Activated CD4-positive, alpha-beta T cell treated with anti-CD3 and anti-CD28 coated beads for 36 hours (primary cell): ENCODE measurements at regions of chr17 and their contacts with region 1.

Region 1: GRCh38 chr17:41665566-41666236 is 23.0 kb upstream of the EIF1 start:
- DNase-seq: peak; percentile 95
- ATAC-seq: peak; percentile 85
- H3K4me3 Mint-ChIP-seq: peak overlapping the region; percentile 78
- H3K27ac Mint-ChIP-seq: peak overlapping the region; percentile 95
- H3K4me1 Mint-ChIP-seq: peaks cover 42% of the 10 kb centered on the region
- H3K27me3 Mint-ChIP-seq: peaks cover 3% of the 10 kb centered on the region

Region 2: GRCh38 chr17:40219073-40219860 is 1446.4 kb before region 1 on chr17 and contains the start of gene WIPF2:
- CTCF ChIA-PET with region 1: no interaction called
- POLR2A ChIA-PET with region 1: no interaction called
- intact Hi-C with region 1: loop called in 1 of 2 experiments (anchors 2 kb)
- DNase-seq: peak; percentile 98
- ATAC-seq: peak; percentile 96
- H3K4me3 Mint-ChIP-seq: peak within 1 kb of the TSS; percentile 89
- H3K27ac Mint-ChIP-seq: peak within 1 kb of the TSS; percentile 100
- H3K4me1 Mint-ChIP-seq: peaks cover 26% of the 10 kb centered on the region
- H3K27me3 Mint-ChIP-seq: no peaks in the 10 kb centered on the region
- total RNA-seq, gene WIPF2: 18.4 to 23.6 TPM

Region 3: GRCh38 chr17:40857535-40857934 is 808.2 kb before region 1 on chr17:
- CTCF ChIA-PET with region 1: interaction called, 15 read pairs
- POLR2A ChIA-PET with region 1: no interaction called
- intact Hi-C with region 1: loop called (anchors 1 kb)
- DNase-seq: no peak
- ATAC-seq: no peak
- H3K4me3 Mint-ChIP-seq: no peak overlapping the region
- H3K27ac Mint-ChIP-seq: no peak overlapping the region
- H3K4me1 Mint-ChIP-seq: no peaks in the 10 kb centered on the region
- H3K27me3 Mint-ChIP-seq: peaks cover 14% of the 10 kb centered on the region

Region 4: GRCh38 chr17:41338961-41339485 is 326.7 kb before region 1 on chr17:
- CTCF ChIA-PET with region 1: no interaction called
- POLR2A ChIA-PET with region 1: no interaction called
- intact Hi-C with region 1: loop called (anchors 2 to 10 kb)
- DNase-seq: peak; percentile 41
- ATAC-seq: peak; percentile 66
- H3K4me3 Mint-ChIP-seq: no peak overlapping the region
- H3K27ac Mint-ChIP-seq: peak overlapping the region; percentile 55
- H3K4me1 Mint-ChIP-seq: peaks cover 76% of the 10 kb centered on the region
- H3K27me3 Mint-ChIP-seq: peaks cover 4% of the 10 kb centered on the region

Region 5: DNA sequence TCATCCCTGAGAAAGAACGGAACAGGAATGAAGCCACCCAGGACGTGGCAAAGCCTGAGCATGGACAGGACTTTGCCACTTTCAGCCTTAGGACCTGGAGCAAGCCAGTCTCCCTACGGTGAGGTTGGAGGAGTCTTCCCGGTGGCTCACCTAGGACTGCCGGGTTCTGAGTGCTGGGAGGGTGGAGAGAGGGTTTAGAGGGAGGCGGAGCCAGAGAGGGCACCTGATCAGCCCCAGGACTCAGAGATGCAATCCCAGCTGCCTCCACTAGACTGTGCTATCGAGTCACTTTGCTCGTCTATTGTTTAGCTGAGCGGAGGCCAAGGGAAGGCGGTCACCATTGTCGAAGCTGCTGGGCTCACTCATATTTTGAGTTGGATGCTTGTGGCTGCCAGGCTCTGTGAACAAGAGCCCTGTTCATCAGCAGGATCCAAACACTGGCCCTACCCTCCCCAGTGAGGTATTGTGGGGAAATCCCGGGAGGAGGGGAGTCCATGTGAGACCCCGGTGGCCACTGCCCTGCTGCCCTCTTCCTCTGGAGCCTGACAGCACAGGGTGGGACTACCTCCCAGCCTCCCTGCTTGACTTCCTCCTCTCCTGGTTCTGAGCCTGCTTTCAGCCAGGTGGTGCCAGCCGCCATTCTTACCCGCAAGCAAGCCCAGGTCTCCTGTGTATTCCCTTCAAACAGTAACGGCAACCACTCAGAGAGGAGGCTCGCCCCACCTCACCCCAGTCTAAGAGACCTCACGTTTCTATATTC is 86.0 kb before region 1 on chr17:
- CTCF ChIA-PET with region 1: interaction called, 11 read pairs
- POLR2A ChIA-PET with region 1: no interaction called
- intact Hi-C with region 1: loop called in 1 of 2 experiments (anchors 1 kb)
- DNase-seq: peak; percentile 89
- ATAC-seq: peak; percentile 99
- H3K4me3 Mint-ChIP-seq: no peak overlapping the region
- H3K27ac Mint-ChIP-seq: no peak overlapping the region
- H3K4me1 Mint-ChIP-seq: no peaks in the 10 kb centered on the region
- H3K27me3 Mint-ChIP-seq: peaks cover 20% of the 10 kb centered on the region

Region 6: GRCh38 chr17:41593311-41593981 is 72.3 kb before region 1 on chr17:
- CTCF ChIA-PET with region 1: no interaction called
- POLR2A ChIA-PET with region 1: no interaction called
- intact Hi-C with region 1: no loop called
- DNase-seq: no peak
- ATAC-seq: no peak
- H3K4me3 Mint-ChIP-seq: no peak overlapping the region
- H3K27ac Mint-ChIP-seq: no peak overlapping the region
- H3K4me1 Mint-ChIP-seq: no peaks in the 10 kb centered on the region
- H3K27me3 Mint-ChIP-seq: peaks cover 7% of the 10 kb centered on the region

Region 7: DNA sequence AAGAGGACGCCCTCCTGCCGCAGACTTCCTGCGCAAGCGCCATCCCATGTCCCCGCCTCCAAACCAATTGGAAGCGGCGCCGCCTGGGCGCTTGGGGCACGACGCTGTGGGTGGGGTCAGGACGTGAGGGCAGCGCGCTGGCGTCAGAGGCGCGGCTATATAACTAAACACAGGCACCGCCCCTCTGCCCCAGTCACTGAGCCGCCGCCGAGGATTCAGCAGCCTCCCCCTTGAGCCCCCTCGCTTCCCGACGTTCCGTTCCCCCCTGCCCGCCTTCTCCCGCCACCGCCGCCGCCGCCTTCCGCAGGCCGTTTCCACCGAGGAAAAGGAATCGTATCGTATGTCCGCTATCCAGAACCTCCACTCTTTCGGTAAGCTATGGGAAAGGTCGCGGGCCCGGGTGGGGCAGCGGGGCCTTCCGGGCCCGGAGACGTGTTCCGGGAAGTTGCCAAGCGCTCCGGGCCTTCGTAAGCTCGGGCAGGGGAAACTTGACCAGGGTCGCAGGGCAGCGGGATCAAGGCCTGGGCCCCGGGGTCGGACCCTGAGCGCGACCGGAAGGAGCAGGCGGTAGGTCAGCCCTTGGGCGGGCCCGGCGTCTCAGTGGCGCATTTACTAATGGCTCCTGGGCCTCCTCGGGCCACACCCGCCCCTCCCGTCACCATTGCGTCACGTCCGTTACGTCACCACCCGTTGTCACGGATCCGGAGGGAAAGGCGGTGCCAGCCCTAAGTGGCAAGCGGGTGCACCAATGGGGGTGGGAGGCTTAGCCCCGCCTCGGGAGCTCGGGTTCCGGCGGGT is 23.2 kb after region 1 on chr17 and contains the start of gene EIF1:
- CTCF ChIA-PET with region 1: interaction called, 64 read pairs
- POLR2A ChIA-PET with region 1: interaction called, 23 read pairs
- intact Hi-C with region 1: loop called (anchors 1 kb)
- DNase-seq: peak; percentile 100
- ATAC-seq: peak; percentile 81
- H3K4me3 Mint-ChIP-seq: peak within 1 kb of the TSS; percentile 97
- H3K27ac Mint-ChIP-seq: peak within 1 kb of the TSS; percentile 95
- H3K4me1 Mint-ChIP-seq: peaks cover 20% of the 10 kb centered on the region
- H3K27me3 Mint-ChIP-seq: no peaks in the 10 kb centered on the region
- total RNA-seq, gene EIF1: 869 to 977 TPM

Region 8: DNA sequence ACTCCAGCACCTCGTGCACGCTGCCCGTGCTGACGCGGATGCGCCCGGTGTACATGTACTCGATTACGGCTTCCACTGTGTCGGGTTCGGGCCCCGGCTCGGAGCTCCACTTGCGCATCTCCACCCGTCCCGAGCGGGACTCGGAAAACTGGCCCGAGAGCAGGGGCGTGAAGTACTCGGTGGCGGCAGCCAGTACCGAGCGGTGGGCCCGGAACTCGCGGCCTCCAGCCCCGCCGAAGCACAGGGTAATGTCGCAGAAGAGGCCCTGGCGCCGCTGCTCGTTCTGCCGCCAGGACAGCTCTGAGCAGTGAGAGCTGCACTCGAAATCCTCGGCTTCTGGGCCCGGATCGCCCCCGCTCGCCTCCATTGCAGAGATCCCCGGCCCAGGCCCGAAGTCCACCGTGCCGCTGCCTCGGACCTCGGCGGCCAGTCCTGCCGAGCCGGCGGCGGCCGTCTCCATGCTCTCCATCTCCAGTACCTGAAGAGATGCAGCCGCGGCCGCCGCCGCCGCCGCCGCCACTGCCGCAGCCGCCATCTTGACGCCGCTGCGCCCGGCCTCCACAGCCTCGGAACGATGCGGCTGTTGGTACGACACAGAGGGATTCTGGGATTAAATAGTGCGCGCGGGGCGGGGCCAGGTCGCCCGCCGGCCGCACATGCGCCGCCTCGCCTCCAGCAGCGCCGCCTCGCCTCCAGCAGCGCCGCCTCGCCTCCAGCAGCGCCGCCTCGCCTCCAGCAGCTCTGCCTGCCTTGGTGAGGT is 199.3 kb after region 1 on chr17 and contains the start of gene KLHL11:
- CTCF ChIA-PET with region 1: no interaction called
- POLR2A ChIA-PET with region 1: no interaction called
- intact Hi-C with region 1: no loop called
- DNase-seq: peak; percentile 94
- ATAC-seq: peak; percentile 88
- H3K4me3 Mint-ChIP-seq: no peak within 1 kb of the TSS
- H3K27ac Mint-ChIP-seq: peak within 1 kb of the TSS; percentile 68
- H3K4me1 Mint-ChIP-seq: peaks cover 49% of the 10 kb centered on the region
- H3K27me3 Mint-ChIP-seq: no peaks in the 10 kb centered on the region
- total RNA-seq, gene KLHL11: 16.4 to 18.0 TPM